Dorsolateral prefrontal cortex (tissue), 120 donors: ENCODE measurements at regions of chr12 and their contacts with region 1.

Region 1: GRCh38 chr12:70719672-70720420 is 82.6 kb upstream of the PTPRB start:
- DNase-seq: peak in 8 of 10 donors; percentile 21 to 68 (median 48)
- H3K4me3 ChIP-seq: peak overlapping the region; percentile 7 to 67 (median 49)
- H3K27ac ChIP-seq: peak overlapping the region in 25 of 59 donors; percentile 2 to 73 (median 46)
- H3K27me3 ChIP-seq: no peaks in the 10 kb centered on the region
- CTCF ChIP-seq: peak; percentile 65 to 99 (median 94)

Region 2: DNA sequence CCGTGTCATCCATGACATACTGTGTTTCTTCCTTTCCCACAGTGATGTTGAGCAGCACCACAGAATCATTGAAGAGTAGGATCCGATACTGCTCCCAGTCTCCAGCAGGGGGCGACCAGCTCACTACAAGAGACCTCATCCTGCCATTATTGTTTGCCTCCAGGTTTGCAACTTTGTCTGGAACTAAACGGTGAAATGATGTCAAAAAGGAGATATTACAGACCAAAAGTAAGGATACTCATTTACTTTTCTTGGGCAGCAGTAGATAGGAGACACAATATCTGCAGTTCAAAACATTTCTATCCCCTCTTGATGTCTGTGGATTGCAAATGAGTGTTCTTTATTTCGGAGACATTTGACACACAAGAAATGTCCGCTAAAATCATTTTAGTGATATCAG is 129.8 kb before region 1 on chr12:
- intact Hi-C with region 1: loop called (anchors 1 to 5 kb)
- DNase-seq: peak; percentile 51 to 90 (median 74)
- H3K4me3 ChIP-seq: no peak overlapping the region
- H3K27ac ChIP-seq: no peak overlapping the region
- H3K27me3 ChIP-seq: no peaks in the 10 kb centered on the region
- CTCF ChIP-seq: peak; percentile 63 to 97 (median 89)